PC-3 (cell line): ENCODE measurements at regions of chr1 and their contacts with region 1.

Region 1: GRCh38 chr1:64966158-64966971 is at the start of gene JAK1:
- DNase-seq: peak; percentile 80
- ATAC-seq: peak; percentile 80
- H3K4me3 ChIP-seq: peak within 1 kb of the TSS; percentile 100
- H3K27ac ChIP-seq: 0 out of 2 replicates have a peak within 1 kb of the TSS, but pooled peaks have one; percentile 11
- H3K4me1 ChIP-seq: 0 out of 2 replicates have a peak, but pooled peaks cover 13% of the 10 kb centered on the region
- H3K27me3 ChIP-seq: no peaks in the 10 kb centered on the region
- CTCF ChIP-seq: no peak
- total RNA-seq, gene JAK1: 44.1 and 52.2 TPM in 2 replicates

Region 2: DNA sequence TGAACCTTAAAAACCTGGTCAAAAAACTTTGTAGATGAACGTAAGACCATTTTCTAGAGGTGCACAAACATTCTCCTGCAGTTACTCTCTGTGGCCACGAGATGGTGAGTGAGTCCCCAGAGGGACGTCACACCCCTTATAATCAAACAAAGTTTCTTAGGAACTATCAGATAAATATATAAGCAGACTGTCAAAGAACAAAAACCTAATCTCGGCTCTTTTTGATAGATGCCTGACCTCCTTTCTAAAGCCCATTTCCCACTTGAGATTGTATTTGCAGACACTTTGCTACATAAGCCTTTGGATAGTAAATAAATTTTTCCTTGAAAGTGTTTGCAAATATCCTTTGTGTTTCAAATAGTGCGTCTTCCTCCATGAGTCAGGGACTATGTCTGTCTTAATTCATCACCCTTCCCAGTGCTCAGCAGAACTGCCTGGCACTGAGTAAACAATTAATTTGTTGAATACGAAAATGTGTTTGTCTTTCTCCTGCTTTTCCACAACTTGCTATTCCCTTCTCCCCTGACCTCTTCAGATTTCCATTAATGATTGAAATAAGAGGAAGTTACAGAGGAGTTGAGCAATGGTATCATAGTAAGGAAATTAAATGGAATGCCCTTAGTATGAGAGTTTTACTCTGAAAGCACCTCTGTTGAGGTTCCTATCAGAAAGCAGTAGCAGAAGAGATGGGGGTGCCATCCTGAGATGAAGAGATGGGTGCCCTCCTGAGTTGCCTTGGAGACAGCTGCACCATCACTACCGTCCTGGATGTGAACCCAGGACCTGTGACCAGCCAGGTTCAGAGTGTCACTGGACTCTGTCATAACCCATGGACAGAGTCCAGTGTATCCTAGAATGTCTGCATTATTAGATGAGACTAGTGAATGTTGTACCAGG is 279.3 kb before region 1 on chr1:
- CTCF ChIA-PET with region 1: no interaction called
- POLR2A ChIA-PET with region 1: no interaction called
- intact Hi-C with region 1: loop called (anchors 5 kb)
- DNase-seq: peak; percentile 76
- ATAC-seq: peak; percentile 81
- H3K4me3 ChIP-seq: peak overlapping the region; percentile 25; the same call in 1 of the 2 replicates
- H3K27ac ChIP-seq: peak overlapping the region; percentile 70
- H3K4me1 ChIP-seq: peaks cover 28% of the 10 kb centered on the region
- H3K27me3 ChIP-seq: no peaks in the 10 kb centered on the region
- CTCF ChIP-seq: peak; percentile 90

Region 3: DNA sequence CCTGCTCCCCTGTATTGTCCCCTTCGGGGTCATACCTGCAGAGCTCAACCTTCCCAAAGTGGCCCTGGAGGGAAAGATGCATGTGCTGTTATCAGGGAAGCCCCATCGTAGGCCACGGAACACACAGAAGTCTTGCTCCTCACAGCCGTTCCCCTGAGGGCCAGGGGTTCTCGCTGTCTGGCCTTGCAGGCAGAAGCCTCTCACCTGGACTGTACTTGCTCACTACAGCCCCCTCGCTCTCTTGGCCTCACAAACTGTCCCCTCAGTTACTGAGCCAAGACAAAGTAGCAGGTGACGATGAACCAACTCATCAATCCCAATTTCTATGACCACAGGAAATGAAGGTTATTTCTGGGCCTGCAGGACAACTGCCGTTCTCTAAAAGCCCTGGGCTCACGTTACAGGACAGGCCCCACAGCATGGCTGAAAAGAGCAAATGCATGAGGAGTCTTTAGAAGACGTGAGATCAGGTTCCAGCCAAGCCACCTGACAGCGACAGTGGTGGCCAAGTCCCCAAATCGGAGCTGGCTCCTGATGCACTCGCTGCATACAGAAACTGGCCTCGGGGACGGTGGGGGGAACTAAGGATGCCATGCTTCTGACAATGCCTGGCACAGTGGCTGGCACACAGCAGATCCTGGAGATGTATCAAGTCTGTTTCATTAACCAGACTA is 126.5 kb before region 1 on chr1:
- CTCF ChIA-PET with region 1: no interaction called
- POLR2A ChIA-PET with region 1: no interaction called
- intact Hi-C with region 1: loop called (anchors 5 kb)
- DNase-seq: no peak
- ATAC-seq: no peak
- H3K4me3 ChIP-seq: no peak overlapping the region
- H3K27ac ChIP-seq: no peak overlapping the region
- H3K4me1 ChIP-seq: peaks cover 11% of the 10 kb centered on the region
- H3K27me3 ChIP-seq: no peaks in the 10 kb centered on the region
- CTCF ChIP-seq: no peak

Region 4: GRCh38 chr1:64864018-64864940 is 102.1 kb before region 1 on chr1:
- CTCF ChIA-PET with region 1: no interaction called
- POLR2A ChIA-PET with region 1: no interaction called
- intact Hi-C with region 1: loop called (anchors 1 kb)
- DNase-seq: peak; percentile 84
- ATAC-seq: peak; percentile 90
- H3K4me3 ChIP-seq: no peak overlapping the region
- H3K27ac ChIP-seq: peak overlapping the region; percentile 44
- H3K4me1 ChIP-seq: peaks cover 17% of the 10 kb centered on the region
- H3K27me3 ChIP-seq: no peaks in the 10 kb centered on the region
- CTCF ChIP-seq: no peak

Region 5: GRCh38 chr1:64898107-64898845 is 68.1 kb before region 1 on chr1:
- CTCF ChIA-PET with region 1: no interaction called
- POLR2A ChIA-PET with region 1: interaction called, 3 read pairs
- intact Hi-C with region 1: loop called (anchors 2 kb)
- DNase-seq: peak; percentile 96
- ATAC-seq: peak; percentile 97
- H3K4me3 ChIP-seq: peak overlapping the region; percentile 39; the same call in 1 of the 2 replicates
- H3K27ac ChIP-seq: peak overlapping the region; percentile 97
- H3K4me1 ChIP-seq: peaks cover 34% of the 10 kb centered on the region
- H3K27me3 ChIP-seq: no peaks in the 10 kb centered on the region
- CTCF ChIP-seq: no peak

Region 6: GRCh38 chr1:64917328-64917861 is 49.0 kb before region 1 on chr1:
- CTCF ChIA-PET with region 1: no interaction called
- POLR2A ChIA-PET with region 1: no interaction called
- intact Hi-C with region 1: loop called (anchors 2 kb)
- DNase-seq: peak; percentile 85
- ATAC-seq: peak; percentile 54
- H3K4me3 ChIP-seq: no peak overlapping the region
- H3K27ac ChIP-seq: peak overlapping the region; percentile 83
- H3K4me1 ChIP-seq: peaks cover 58% of the 10 kb centered on the region
- H3K27me3 ChIP-seq: no peaks in the 10 kb centered on the region
- CTCF ChIP-seq: no peak

Region 7: GRCh38 chr1:64956010-64956640 is 10.2 kb before region 1 on chr1:
- CTCF ChIA-PET with region 1: no interaction called
- POLR2A ChIA-PET with region 1: no interaction called
- intact Hi-C with region 1: no loop called
- DNase-seq: peak; percentile 24
- ATAC-seq: peak; percentile 59
- H3K4me3 ChIP-seq: no peak overlapping the region
- H3K27ac ChIP-seq: no peak overlapping the region
- H3K4me1 ChIP-seq: peaks cover 13% of the 10 kb centered on the region
- H3K27me3 ChIP-seq: no peaks in the 10 kb centered on the region
- CTCF ChIP-seq: no peak

Region 8: GRCh38 chr1:65020774-65021173 is 54.4 kb after region 1 on chr1:
- CTCF ChIA-PET with region 1: interaction called, 11 read pairs
- POLR2A ChIA-PET with region 1: no interaction called
- intact Hi-C with region 1: loop called (anchors 5 kb)
- DNase-seq: peak; percentile 23
- ATAC-seq: peak; percentile 85
- H3K4me3 ChIP-seq: no peak overlapping the region
- H3K27ac ChIP-seq: no peak overlapping the region
- H3K4me1 ChIP-seq: no peaks in the 10 kb centered on the region
- H3K27me3 ChIP-seq: no peaks in the 10 kb centered on the region
- CTCF ChIP-seq: peak; percentile 61

Region 9: DNA sequence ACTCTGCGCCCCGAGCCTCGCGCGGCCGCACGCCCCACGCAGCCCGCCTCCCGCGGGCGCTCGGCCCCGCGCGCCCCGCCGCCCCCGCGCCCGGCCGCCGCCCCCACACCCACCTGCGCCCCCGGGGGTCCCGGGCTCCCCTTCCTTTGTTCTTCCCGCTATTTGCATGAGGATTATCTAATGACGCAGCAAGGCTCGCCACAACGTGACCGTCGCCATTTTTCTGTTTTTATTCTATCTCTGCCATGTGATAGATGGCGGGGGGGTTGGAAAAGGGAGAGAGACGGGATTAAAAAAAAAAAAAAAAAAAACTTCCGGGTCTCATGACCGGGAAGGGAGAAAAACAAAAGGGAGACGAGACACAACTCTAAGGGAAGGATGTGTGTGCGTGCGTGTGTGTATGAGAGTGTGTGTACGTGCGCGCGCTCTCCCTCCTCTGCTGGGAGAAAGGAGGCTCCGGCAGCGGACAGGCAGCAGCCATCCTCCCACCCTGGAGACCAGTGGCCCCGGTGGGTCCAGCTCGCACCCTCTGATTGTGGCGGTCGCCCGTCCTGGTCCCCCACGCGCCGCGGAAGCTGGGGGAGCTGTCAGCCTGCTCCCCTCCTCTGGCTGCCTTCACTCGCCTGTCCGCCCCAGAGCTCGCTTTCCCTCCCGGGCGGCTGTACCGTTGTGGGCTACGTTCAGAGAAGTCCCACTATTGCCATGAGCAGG is 101.3 kb after region 1 on chr1:
- CTCF ChIA-PET with region 1: no interaction called
- POLR2A ChIA-PET with region 1: no interaction called
- intact Hi-C with region 1: no loop called
- DNase-seq: peak; percentile 50
- ATAC-seq: peak; percentile 34
- H3K4me3 ChIP-seq: peak overlapping the region; percentile 79
- H3K27ac ChIP-seq: no peak overlapping the region
- H3K4me1 ChIP-seq: peaks cover 8% of the 10 kb centered on the region; the same call in 1 of the 2 replicates
- H3K27me3 ChIP-seq: no peaks in the 10 kb centered on the region
- CTCF ChIP-seq: no peak

Region 10: GRCh38 chr1:65090403-65090802 is 124.0 kb after region 1 on chr1:
- CTCF ChIA-PET with region 1: no interaction called
- POLR2A ChIA-PET with region 1: no interaction called
- intact Hi-C with region 1: no loop called
- DNase-seq: no peak
- ATAC-seq: no peak
- H3K4me3 ChIP-seq: no peak overlapping the region
- H3K27ac ChIP-seq: no peak overlapping the region
- H3K4me1 ChIP-seq: no peaks in the 10 kb centered on the region
- H3K27me3 ChIP-seq: no peaks in the 10 kb centered on the region
- CTCF ChIP-seq: no peak